ENCODE measurements at regions of chr6 and their contacts with region 1.

Region 1: DNA sequence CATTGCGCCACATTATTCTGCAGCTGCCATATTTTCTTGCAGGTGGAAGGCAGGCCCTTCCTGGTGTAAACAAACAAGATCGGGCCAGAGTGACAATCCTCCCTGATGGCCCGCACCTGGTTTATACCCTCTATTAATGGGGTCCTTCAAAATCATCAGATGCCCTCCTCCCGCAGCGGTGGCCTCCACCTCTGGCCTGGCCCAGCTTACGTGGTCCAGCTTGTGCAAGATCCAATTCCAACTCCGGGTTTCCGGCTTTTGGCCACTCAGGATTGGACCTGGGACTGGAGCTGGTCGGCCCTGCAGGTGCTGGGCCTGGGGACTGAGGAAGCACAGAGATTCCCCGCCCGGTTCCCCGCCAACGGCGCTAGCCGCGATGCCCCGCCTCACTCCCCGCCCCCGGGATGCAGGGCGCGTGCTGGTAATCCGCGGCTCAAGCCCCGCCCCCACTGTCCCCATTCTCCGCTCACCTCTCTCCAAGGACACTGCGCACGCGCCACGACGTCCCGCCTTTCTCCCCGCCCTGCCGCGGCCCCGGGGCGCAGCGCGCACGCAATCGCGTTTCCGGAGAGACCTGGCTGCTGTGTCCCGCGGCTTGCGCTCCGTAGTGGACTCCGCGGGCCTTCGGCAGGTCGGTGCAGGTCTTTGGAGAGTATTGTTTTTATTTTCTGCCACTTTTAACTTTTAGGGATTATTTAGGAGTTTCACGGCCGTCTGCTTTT is at the start of gene TMEM14B:
- DNase-seq: peak; percentile 72
- H3K4me3 ChIP-seq: peak within 1 kb of the TSS; percentile 74
- H3K27me3 ChIP-seq: no peaks in the 10 kb centered on the region
- CTCF ChIP-seq: no peak
- polyA plus RNA-seq, gene TMEM14B: 52.4 and 89.4 TPM in 2 replicates

Region 2: GRCh38 chr6:10759312-10759839 is 12.0 kb after region 1 on chr6:
- CTCF ChIA-PET with region 1: interaction called, 10 read pairs
- POLR2A ChIA-PET with region 1: no interaction called
- DNase-seq: peak; percentile 59
- H3K4me3 ChIP-seq: no peak overlapping the region
- H3K27me3 ChIP-seq: no peaks in the 10 kb centered on the region
- CTCF ChIP-seq: peak; percentile 66